ENCODE measurements at regions of chr1 and their contacts with region 1.

Region 1: DNA sequence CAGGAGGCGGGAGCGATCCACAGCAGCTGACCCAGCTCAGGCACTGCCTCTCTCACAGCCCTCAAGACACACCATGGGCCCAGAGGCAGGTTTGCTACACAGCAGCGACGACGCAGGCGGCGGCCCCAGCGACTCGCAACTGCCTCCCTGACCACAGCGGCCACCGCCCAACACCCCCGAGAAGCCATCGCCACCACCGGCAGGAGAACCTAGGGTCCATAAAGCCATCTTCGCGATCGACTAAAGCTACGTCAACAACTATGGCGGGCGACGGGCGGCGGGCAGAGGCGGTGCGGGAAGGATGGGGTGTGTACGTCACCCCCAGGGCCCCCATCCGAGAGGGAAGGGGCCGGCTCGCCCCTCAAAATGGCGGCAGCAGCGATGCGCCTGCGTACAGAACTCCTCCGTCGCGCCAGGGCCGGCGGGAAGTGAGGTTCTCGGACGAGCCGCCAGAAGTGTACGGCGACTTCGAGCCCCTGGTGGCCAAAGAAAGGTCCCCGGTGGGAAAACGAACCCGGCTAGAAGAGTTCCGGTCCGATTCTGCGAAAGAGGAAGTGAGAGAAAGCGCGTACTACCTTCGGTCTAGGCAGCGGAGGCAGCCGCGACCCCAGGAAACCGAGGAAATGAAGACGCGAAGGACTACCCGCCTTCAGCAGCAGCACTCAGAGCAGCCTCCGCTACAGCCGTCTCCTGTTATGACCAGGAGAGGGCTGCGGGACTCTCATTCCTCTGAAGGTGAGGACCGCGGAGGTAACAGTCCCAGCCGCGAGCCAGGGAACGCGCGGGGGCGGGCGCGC is at the start of gene TOR1AIP1:
- DNase-seq: peak; percentile 98 to 99 (median 98)
- H3K4me3 ChIP-seq: peak within 1 kb of the TSS; percentile 80 to 94
- H3K4me3 Mint-ChIP-seq: peak within 1 kb of the TSS; percentile 94 to 99 (median 96)
- H3K27ac ChIP-seq: peak within 1 kb of the TSS; percentile 99
- H3K27ac Mint-ChIP-seq: peak within 1 kb of the TSS; percentile 99 to 100 (median 100)
- H3K4me1 ChIP-seq: peaks cover 53% of the 10 kb centered on the region
- H3K4me1 Mint-ChIP-seq: peaks cover 31 to 77% (median 53%) of the 10 kb centered on the region in 4 donors
- H3K27me3 ChIP-seq: no peaks in the 10 kb centered on the region
- H3K27me3 Mint-ChIP-seq: no peaks in the 10 kb centered on the region
- total RNA-seq, gene TOR1AIP1: 53.8 to 61.0 TPM

Region 2: GRCh38 chr1:179831852-179832699 is 50.4 kb before region 1 on chr1:
- CTCF ChIA-PET with region 1: no interaction called
- POLR2A ChIA-PET with region 1: interaction called, 12 read pairs
- intact Hi-C with region 1: loop called (anchors 5 kb)
- DNase-seq: peak in 4 of 5 donors; percentile 53 to 66 (median 63)
- H3K4me3 ChIP-seq: peak overlapping the region in 1 of 2 donors; percentile 13
- H3K4me3 Mint-ChIP-seq: peak overlapping the region; percentile 50 to 81 (median 76)
- H3K27ac ChIP-seq: peak overlapping the region; percentile 29
- H3K27ac Mint-ChIP-seq: peak overlapping the region; percentile 61 to 94 (median 87)
- H3K4me1 ChIP-seq: peaks cover 22% of the 10 kb centered on the region
- H3K4me1 Mint-ChIP-seq: peaks cover 21 to 38% (median 25%) of the 10 kb centered on the region in 4 donors
- H3K27me3 ChIP-seq: no peaks in the 10 kb centered on the region
- H3K27me3 Mint-ChIP-seq: no peaks in the 10 kb centered on the region

Region 3: DNA sequence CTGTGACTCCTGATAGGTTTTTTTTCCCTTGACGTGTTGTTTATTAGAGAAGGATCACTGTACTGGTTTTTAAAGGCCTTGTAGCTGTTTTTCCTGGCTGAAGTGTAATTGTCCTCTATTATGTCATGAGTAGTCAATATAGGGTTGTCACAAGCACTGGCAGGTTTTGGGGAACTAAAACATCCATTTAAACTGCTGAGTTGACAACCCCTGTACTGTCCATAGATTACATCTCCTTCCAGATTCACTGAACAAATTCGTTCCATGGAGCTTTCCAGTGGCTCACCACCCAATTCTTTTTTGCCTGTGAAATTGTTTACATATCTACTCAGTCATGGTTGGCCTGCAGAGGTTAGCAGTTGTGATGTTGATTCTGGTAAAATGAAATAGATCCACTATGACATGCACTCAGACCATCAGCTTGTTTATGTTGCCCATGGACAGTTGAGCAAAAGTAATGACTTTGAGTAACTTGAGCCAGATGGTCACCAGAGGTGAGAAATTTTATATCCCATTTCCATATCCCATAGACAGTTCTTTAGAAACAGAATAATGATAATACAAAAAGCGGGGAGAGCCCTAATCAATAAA is 212.4 kb after region 1 on chr1:
- CTCF ChIA-PET with region 1: no interaction called
- POLR2A ChIA-PET with region 1: no interaction called
- intact Hi-C with region 1: no loop called
- DNase-seq: no peak
- H3K4me3 ChIP-seq: no peak overlapping the region
- H3K4me3 Mint-ChIP-seq: no peak overlapping the region
- H3K27ac ChIP-seq: no peak overlapping the region
- H3K27ac Mint-ChIP-seq: no peak overlapping the region
- H3K4me1 ChIP-seq: no peaks in the 10 kb centered on the region
- H3K4me1 Mint-ChIP-seq: peaks cover 0 to 3% (median under 1%) of the 10 kb centered on the region in 4 donors
- H3K27me3 ChIP-seq: no peaks in the 10 kb centered on the region
- H3K27me3 Mint-ChIP-seq: no peaks in the 10 kb centered on the region

Region 4: GRCh38 chr1:180154325-180155181 is 272.1 kb after region 1 on chr1 and contains the start of gene QSOX1:
- CTCF ChIA-PET with region 1: no interaction called
- POLR2A ChIA-PET with region 1: interaction called, 22 read pairs
- intact Hi-C with region 1: loop called (anchors 1 kb)
- DNase-seq: peak; percentile 88 to 91 (median 89)
- H3K4me3 ChIP-seq: peak within 1 kb of the TSS; percentile 87 to 94
- H3K4me3 Mint-ChIP-seq: peak within 1 kb of the TSS; percentile 89 to 94 (median 92)
- H3K27ac ChIP-seq: peak within 1 kb of the TSS; percentile 68
- H3K27ac Mint-ChIP-seq: peak within 1 kb of the TSS; percentile 85 to 94 (median 92)
- H3K4me1 ChIP-seq: peaks cover 27% of the 10 kb centered on the region
- H3K4me1 Mint-ChIP-seq: peaks cover 14 to 52% (median 34%) of the 10 kb centered on the region in 4 donors
- H3K27me3 ChIP-seq: no peaks in the 10 kb centered on the region
- H3K27me3 Mint-ChIP-seq: no peaks in the 10 kb centered on the region
- total RNA-seq, gene QSOX1: 19.1 to 25.1 TPM

Region 5: DNA sequence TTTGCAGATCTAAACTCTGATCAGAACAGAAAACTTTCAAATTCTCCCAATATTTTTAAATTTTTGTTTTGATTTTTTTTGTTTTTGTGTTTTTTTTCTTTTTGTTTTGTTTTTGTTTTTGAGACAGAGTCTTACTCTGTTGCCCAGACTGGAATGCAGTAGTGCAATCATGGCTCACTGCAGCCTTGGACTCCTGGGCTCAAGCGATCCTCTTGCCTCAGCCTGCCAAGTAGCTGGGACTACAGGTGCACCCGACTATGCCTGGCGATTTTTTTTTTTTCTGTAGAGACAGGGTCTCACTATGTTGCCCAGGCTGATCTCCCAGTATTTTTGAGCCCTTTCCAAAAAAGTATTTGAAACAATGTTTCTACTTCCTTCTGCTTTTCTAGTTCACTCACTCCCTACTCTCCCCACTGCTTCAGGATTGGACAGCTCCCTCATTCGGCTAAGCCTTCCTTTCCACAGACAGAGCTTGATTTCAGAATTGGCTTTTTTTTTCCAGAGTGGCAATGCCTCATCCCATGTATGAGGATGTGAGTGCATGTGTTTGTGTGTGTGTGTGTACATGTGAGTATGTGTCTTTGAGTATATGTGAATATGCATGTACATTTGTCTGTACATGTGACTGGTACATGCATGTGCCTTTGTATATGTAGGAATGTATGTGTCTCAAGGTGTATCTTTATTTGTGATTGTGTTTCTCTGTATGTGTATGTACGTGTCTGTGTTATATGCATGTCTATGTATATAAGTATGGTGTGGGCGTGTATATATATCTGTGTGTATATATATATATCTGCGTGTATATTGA is 359.5 kb after region 1 on chr1:
- CTCF ChIA-PET with region 1: no interaction called
- POLR2A ChIA-PET with region 1: no interaction called
- intact Hi-C with region 1: no loop called
- DNase-seq: no peak
- H3K4me3 ChIP-seq: no peak overlapping the region
- H3K4me3 Mint-ChIP-seq: no peak overlapping the region
- H3K27ac ChIP-seq: no peak overlapping the region
- H3K27ac Mint-ChIP-seq: no peak overlapping the region
- H3K4me1 ChIP-seq: no peaks in the 10 kb centered on the region
- H3K4me1 Mint-ChIP-seq: peaks cover 0 to 2% (median 0%) of the 10 kb centered on the region in 4 donors
- H3K27me3 ChIP-seq: peaks cover 23% of the 10 kb centered on the region
- H3K27me3 Mint-ChIP-seq: peaks cover 49 to 50% of the 10 kb centered on the region in 2 donors

Region 6: GRCh38 chr1:180462102-180462501 is 579.7 kb after region 1 on chr1:
- CTCF ChIA-PET with region 1: no interaction called
- POLR2A ChIA-PET with region 1: no interaction called
- intact Hi-C with region 1: no loop called
- DNase-seq: no peak
- H3K4me3 ChIP-seq: no peak overlapping the region
- H3K4me3 Mint-ChIP-seq: peak overlapping the region in 2 of 8 donors; percentile 1 to 26
- H3K27ac ChIP-seq: no peak overlapping the region
- H3K27ac Mint-ChIP-seq: no peak overlapping the region
- H3K4me1 ChIP-seq: no peaks in the 10 kb centered on the region
- H3K4me1 Mint-ChIP-seq: peaks cover 11 to 28% (median 23%) of the 10 kb centered on the region in 4 donors
- H3K27me3 ChIP-seq: no peaks in the 10 kb centered on the region
- H3K27me3 Mint-ChIP-seq: no peaks in the 10 kb centered on the region

Region 7: GRCh38 chr1:180502360-180503273 is 620.2 kb after region 1 on chr1 and contains the start of gene ACBD6:
- CTCF ChIA-PET with region 1: no interaction called
- POLR2A ChIA-PET with region 1: interaction called, 16 read pairs
- intact Hi-C with region 1: loop called (anchors 1 kb)
- DNase-seq: peak; percentile 86 to 91 (median 88)
- H3K4me3 ChIP-seq: peak within 1 kb of the TSS; percentile 89 to 95
- H3K4me3 Mint-ChIP-seq: peak within 1 kb of the TSS; percentile 96 to 99 (median 98)
- H3K27ac ChIP-seq: peak within 1 kb of the TSS; percentile 71
- H3K27ac Mint-ChIP-seq: peak within 1 kb of the TSS; percentile 92 to 99 (median 97)
- H3K4me1 ChIP-seq: peaks cover 42% of the 10 kb centered on the region
- H3K4me1 Mint-ChIP-seq: peaks cover 23 to 42% (median 31%) of the 10 kb centered on the region in 4 donors
- H3K27me3 ChIP-seq: no peaks in the 10 kb centered on the region
- H3K27me3 Mint-ChIP-seq: no peaks in the 10 kb centered on the region
- total RNA-seq, gene ACBD6: 55.1 to 64.2 TPM